Psoas muscle (tissue), 8 donors: ENCODE measurements at regions of chr14 and their contacts with region 1.

Region 1: GRCh38 chr14:32469388-32470160 is 140.5 kb downstream of the AKAP6 start:
- DNase-seq: no peak
- ATAC-seq: peak in 1 of 4 donors; percentile 67
- H3K4me3 ChIP-seq: no peak overlapping the region
- H3K27ac ChIP-seq: peak overlapping the region; percentile 44
- H3K4me1 ChIP-seq: peaks cover 56% of the 10 kb centered on the region
- H3K27me3 ChIP-seq: no peaks in the 10 kb centered on the region
- CTCF ChIP-seq: peak; percentile 65

Region 2: GRCh38 chr14:31510222-31510621 is 959.4 kb before region 1 on chr14:
- intact Hi-C with region 1: loop called in 1 of 2 experiments (anchors 2 kb)
- DNase-seq: no peak
- ATAC-seq: no peak
- H3K4me3 ChIP-seq: no peak overlapping the region
- H3K27ac ChIP-seq: no peak overlapping the region
- H3K4me1 ChIP-seq: no peaks in the 10 kb centered on the region
- H3K27me3 ChIP-seq: no peaks in the 10 kb centered on the region
- CTCF ChIP-seq: peak; percentile 70

Region 3: GRCh38 chr14:32076278-32077080 is 393.1 kb before region 1 on chr14:
- intact Hi-C with region 1: loop called (anchors 5 kb)
- DNase-seq: peak; percentile 98
- ATAC-seq: peak; percentile 91 to 96 (median 93)
- H3K4me3 ChIP-seq: peak overlapping the region; percentile 90
- H3K27ac ChIP-seq: peak overlapping the region; percentile 95
- H3K4me1 ChIP-seq: peaks cover 31% of the 10 kb centered on the region
- H3K27me3 ChIP-seq: no peaks in the 10 kb centered on the region
- CTCF ChIP-seq: no peak

Region 4: DNA sequence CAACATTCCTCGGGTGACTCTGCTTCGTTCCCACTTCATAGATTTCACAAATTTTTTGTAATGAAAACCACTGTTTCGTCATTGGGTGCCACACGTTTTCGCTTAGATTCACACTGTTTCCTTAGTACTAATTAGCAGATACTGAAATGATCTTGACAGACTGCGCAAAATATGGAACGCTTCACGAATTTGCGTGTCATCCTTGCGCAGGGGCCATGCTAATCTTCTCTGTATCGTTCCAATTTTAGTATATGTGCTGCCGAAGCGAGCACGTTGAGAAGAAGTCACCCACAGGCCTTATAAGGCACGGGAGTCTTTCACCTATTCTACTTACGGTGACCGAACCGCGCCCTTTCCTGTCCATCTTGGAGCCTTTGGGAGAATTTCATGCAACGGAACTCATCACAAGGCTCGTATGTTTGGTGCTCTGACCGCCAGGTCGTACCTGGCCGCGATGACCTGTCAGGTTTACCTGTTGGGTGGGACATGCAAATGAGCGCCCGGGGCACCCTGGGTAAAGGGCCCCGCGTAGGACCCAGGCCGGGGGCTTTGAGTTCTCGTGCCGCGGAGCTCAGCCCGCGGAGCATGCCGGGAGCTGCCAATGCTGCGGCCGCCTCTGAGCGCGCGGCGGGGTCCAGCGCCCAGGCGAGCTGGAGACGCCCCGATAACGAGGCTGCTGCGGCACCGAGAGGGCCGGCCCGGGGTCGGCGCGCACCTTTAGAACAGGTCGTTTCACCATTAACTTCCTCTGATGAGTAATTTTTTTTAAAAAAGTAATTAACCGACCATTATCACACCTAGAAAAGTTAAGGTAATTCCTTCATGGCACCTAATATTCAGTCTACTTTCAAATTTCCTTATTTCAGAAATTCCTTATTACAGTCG is 266.3 kb before region 1 on chr14 and contains the start of gene RNU6-8:
- intact Hi-C with region 1: loop called in 1 of 2 experiments (anchors 5 kb)
- DNase-seq: peak; percentile 85 to 95
- ATAC-seq: peak; percentile 89 to 93 (median 92)
- H3K4me3 ChIP-seq: peak within 1 kb of the TSS; percentile 84
- H3K27ac ChIP-seq: peak within 1 kb of the TSS; percentile 89
- H3K4me1 ChIP-seq: peaks cover 5% of the 10 kb centered on the region
- H3K27me3 ChIP-seq: no peaks in the 10 kb centered on the region
- CTCF ChIP-seq: no peak
- total RNA-seq, gene RNU6-8: not detected

Region 5: DNA sequence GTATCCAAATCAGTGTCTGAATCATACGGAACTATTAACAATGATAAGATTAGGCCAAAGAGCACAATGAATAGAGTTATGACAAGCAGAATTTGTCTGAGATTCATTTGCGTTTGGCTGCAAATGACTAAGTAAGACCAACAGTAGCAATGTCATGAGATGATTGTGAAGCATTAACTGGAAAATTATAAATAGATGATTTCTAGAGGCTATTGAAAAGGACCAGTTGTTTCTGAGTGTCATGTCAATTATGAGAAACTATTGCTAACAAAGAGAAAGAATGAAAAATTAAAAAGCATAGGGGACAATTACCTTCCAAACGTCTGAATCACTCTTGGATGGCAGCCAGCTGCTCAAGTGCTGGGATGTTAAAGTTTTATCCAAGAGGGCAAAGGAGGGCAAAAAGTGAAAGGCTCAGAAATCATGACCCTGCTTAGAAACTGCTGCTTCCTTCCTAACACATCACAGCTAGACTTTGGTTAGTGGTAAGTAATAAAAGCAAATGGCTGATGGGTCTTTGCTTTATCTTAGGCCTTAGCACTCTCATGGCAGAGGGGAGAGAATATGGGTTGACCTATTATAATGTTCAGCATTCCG is 51.5 kb before region 1 on chr14:
- intact Hi-C with region 1: no loop called
- DNase-seq: no peak
- ATAC-seq: peak; percentile 23 to 54 (median 36)
- H3K4me3 ChIP-seq: no peak overlapping the region
- H3K27ac ChIP-seq: no peak overlapping the region
- H3K4me1 ChIP-seq: peaks cover 15% of the 10 kb centered on the region
- H3K27me3 ChIP-seq: no peaks in the 10 kb centered on the region
- CTCF ChIP-seq: no peak

Region 6: GRCh38 chr14:32509632-32510187 is 40.1 kb after region 1 on chr14:
- intact Hi-C with region 1: loop called in 1 of 2 experiments (anchors 5 kb)
- DNase-seq: peak; percentile 67 to 82
- ATAC-seq: peak; percentile 81 to 88 (median 82)
- H3K4me3 ChIP-seq: peak overlapping the region; percentile 22
- H3K27ac ChIP-seq: peak overlapping the region; percentile 91
- H3K4me1 ChIP-seq: peaks cover 82% of the 10 kb centered on the region
- H3K27me3 ChIP-seq: no peaks in the 10 kb centered on the region
- CTCF ChIP-seq: no peak